HepG2 (cell line): ENCODE measurements at regions of chr6 and their contacts with region 1.

Region 1: DNA sequence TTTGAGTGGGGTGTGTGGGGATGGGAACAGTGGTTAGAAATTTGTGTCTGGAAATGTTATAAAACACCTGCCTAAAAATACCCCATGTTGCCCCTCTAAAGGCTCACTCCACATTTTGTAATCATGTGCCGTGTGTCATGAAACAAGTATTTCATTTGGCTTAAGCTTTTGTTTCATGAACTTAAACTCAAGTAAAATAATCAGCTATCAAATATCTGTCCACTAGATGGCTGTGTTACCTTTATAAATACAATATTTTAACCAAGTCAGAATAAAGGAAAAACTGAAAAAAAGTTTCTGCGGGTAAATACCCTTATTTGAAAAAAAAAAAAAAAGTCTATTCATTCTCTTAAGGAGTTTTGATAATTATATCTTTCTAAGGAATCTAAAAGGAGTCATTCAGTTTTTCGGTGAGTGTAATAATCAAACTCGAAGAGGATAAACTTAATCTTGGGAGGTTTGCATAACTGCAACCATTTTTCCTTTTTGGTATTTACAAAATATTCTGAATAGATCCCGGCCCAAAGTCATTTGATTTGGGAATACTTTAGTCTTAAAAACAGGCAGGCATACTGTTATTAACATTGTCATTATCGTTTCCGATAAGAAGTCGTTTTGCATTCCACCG is 29.9 kb upstream of the MTRF1L start:
- DNase-seq: peak; percentile 22
- ATAC-seq: no peak
- H3K4me3 ChIP-seq: no peak overlapping the region
- H3K27ac ChIP-seq: no peak overlapping the region
- H3K4me1 ChIP-seq: peaks cover 12% of the 10 kb centered on the region
- H3K27me3 ChIP-seq: no peaks in the 10 kb centered on the region
- CTCF ChIP-seq: peak; percentile 25; the same call in 1 of the 2 replicates
- EP300 ChIP-seq: no peak
- POLR2A ChIP-seq: no peak
- RAD21 ChIP-seq: no peak

Region 2: GRCh38 chr6:153312641-153313040 is 280.3 kb after region 1 on chr6:
- CTCF ChIA-PET with region 1: interaction called, 8 read pairs
- POLR2A ChIA-PET with region 1: no interaction called
- in situ Hi-C with region 1: loop called (anchors 10 kb)
- intact Hi-C with region 1: loop called (anchors 1 kb)
- DNase-seq: peak; percentile 31
- ATAC-seq: peak; percentile 79
- H3K4me3 ChIP-seq: no peak overlapping the region
- H3K27ac ChIP-seq: no peak overlapping the region
- H3K4me1 ChIP-seq: no peaks in the 10 kb centered on the region
- H3K27me3 ChIP-seq: no peaks in the 10 kb centered on the region
- CTCF ChIP-seq: peak; percentile 71
- EP300 ChIP-seq: no peak
- POLR2A ChIP-seq: no peak
- RAD21 ChIP-seq: peak; percentile 38; the same call in 1 of the 2 replicates

Region 3: DNA sequence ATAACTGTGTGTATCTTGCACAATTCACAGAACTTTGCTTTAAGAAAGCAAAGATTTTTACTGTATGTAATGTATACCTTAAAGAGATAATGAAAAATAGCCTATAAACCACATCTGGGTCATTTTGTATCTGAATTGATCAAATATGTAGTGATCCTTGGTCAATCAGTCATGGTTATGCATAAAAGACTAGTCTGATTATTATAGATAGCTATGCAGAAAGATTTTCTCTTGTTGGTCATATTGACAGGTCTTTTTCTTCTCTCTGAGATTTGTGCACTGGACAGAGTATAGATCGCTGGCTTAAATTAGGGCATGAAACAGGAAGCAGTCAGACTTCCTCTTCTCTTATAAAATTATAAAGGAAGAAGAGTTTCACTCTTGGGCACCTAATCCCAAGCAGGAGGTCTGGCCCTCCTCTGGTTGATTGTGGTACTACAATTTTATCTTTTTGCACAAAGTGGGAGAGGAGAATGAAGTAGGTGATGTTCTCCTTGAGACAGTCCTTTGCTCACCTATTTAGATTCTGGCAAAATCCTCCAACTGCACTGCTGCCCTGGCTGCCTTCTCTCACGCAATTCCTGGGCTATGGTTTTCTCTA is 479.6 kb after region 1 on chr6:
- CTCF ChIA-PET with region 1: interaction called, 8 read pairs
- POLR2A ChIA-PET with region 1: no interaction called
- in situ Hi-C with region 1: loop called (anchors 25 kb)
- intact Hi-C with region 1: loop called (anchors 2 kb)
- DNase-seq: peak; percentile 29
- ATAC-seq: peak; percentile 82
- H3K4me3 ChIP-seq: no peak overlapping the region
- H3K27ac ChIP-seq: no peak overlapping the region
- H3K4me1 ChIP-seq: no peaks in the 10 kb centered on the region
- H3K27me3 ChIP-seq: no peaks in the 10 kb centered on the region
- CTCF ChIP-seq: peak; percentile 54
- EP300 ChIP-seq: no peak
- POLR2A ChIP-seq: no peak
- RAD21 ChIP-seq: no peak